ENCODE measurements at regions of chr7 and their contacts with region 1.

Region 1: DNA sequence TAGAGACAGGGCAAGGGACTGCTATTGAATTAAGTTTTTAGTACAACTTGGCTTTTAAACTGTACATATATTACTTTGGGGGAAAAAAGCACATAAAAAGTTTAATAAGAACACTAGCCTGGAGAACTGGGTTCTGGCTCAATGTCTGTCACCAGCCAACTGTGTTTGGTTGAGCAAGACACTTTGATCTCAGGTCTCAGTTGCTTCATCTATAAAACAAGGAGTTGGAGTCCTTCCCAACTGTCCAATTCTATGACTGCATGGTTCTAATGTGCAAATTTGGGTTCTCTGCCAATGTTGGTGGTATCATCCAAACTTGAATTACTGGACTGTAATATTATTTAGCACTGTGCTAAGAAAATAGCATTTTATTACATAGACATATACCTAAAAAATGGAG is 50.3 kb downstream of the ATXN7L1 start:
- DNase-seq: no peak
- ATAC-seq: no peak
- H3K4me3 ChIP-seq: no peak overlapping the region
- H3K27ac ChIP-seq: no peak overlapping the region
- H3K4me1 ChIP-seq: peaks cover 0 to 24% (median 6%) of the 10 kb centered on the region in 12 donors
- H3K27me3 ChIP-seq: no peaks in the 10 kb centered on the region
- CTCF ChIP-seq: no peak
- POLR2A ChIP-seq: no peak

Region 2: DNA sequence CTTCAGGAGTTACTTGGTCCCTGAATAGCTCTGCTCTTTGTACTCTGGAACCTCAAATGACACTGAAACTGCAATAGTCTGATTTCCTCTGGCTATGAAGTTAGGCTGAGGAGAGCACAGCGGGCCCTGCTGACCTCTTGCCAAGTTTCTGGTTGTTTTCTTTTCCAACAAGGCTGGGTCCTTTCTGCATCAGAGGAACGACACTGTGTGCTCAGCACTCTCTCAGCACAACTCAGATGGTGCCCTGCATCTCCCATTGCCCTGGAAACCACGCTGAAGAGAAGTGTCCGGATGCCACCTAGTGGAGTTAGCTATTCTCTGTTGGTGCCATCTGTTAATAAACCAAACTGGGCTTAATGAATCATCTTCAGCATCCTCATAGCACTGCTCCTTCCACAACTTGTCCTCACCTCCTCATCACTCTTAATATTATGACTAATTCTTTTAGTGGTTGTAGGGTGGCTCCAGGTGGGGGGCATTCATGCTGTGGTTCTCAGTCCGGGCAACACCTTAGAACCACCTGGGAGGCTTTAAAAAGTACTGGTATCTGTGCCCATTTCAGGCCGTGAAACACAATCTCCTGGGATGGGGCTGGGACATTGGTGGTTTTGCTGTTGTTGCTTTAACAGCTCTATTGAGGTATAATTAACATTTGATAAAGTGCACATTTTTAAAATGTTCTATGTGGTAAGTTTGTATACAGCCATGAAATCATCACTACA is 236.6 kb before region 1 on chr7:
- intact Hi-C with region 1: no loop called
- DNase-seq: peak in 4 of 5 donors; percentile 15 to 43 (median 32)
- ATAC-seq: peak; percentile 52 to 88 (median 83)
- H3K4me3 ChIP-seq: no peak overlapping the region
- H3K27ac ChIP-seq: no peak overlapping the region
- H3K4me1 ChIP-seq: peaks cover 0 to 11% (median 0%) of the 10 kb centered on the region in 12 donors
- H3K27me3 ChIP-seq: no peaks in the 10 kb centered on the region
- CTCF ChIP-seq: peak; percentile 28 to 57 (median 41)
- POLR2A ChIP-seq: no peak

Region 3: GRCh38 chr7:105776058-105776751 is 49.9 kb before region 1 on chr7:
- intact Hi-C with region 1: loop called in 1 of 10 experiments (anchors 10 kb)
- DNase-seq: peak in 2 of 5 donors; percentile 32 to 83
- ATAC-seq: peak in 3 of 4 donors; percentile 65 to 95 (median 89)
- H3K4me3 ChIP-seq: no peak overlapping the region
- H3K27ac ChIP-seq: no peak overlapping the region
- H3K4me1 ChIP-seq: peaks cover 0 to 13% (median 2%) of the 10 kb centered on the region in 12 donors
- H3K27me3 ChIP-seq: no peaks in the 10 kb centered on the region
- CTCF ChIP-seq: no peak
- POLR2A ChIP-seq: no peak